Gastrocnemius medialis (tissue), 4 donors: ENCODE measurements at regions of chr11 and their contacts with region 1.

Region 1: GRCh38 chr11:22169833-22170232 is 23.1 kb upstream of the ANO5 start:
- DNase-seq: no peak
- ATAC-seq: no peak
- H3K4me3 ChIP-seq: no peak overlapping the region
- H3K27ac ChIP-seq: no peak overlapping the region
- H3K4me1 ChIP-seq: no peaks in the 10 kb centered on the region
- H3K27me3 ChIP-seq: no peaks in the 10 kb centered on the region
- CTCF ChIP-seq: peak in 3 of 5 experiments; percentile 38 to 53 (median 49)
- POLR2A ChIP-seq: no peak

Region 2: GRCh38 chr11:22304337-22304961 is 134.6 kb after region 1 on chr11:
- in situ Hi-C with region 1: loop called in 3 of 4 experiments (anchors 10 kb)
- intact Hi-C with region 1: loop called (anchors 2 kb)
- DNase-seq: no peak
- ATAC-seq: peak in 1 of 2 donors; percentile 60
- H3K4me3 ChIP-seq: no peak overlapping the region
- H3K27ac ChIP-seq: no peak overlapping the region
- H3K4me1 ChIP-seq: no peaks in the 10 kb centered on the region
- H3K27me3 ChIP-seq: no peaks in the 10 kb centered on the region
- CTCF ChIP-seq: peak; percentile 36 to 63 (median 59)
- POLR2A ChIP-seq: no peak

Region 3: GRCh38 chr11:22539821-22540256 is 370.0 kb after region 1 on chr11:
- in situ Hi-C with region 1: no loop called
- intact Hi-C with region 1: no loop called
- DNase-seq: no peak
- ATAC-seq: no peak
- H3K4me3 ChIP-seq: no peak overlapping the region
- H3K27ac ChIP-seq: no peak overlapping the region
- H3K4me1 ChIP-seq: no peaks in the 10 kb centered on the region
- H3K27me3 ChIP-seq: no peaks in the 10 kb centered on the region
- CTCF ChIP-seq: peak in 4 of 5 experiments; percentile 20 to 52 (median 38)
- POLR2A ChIP-seq: no peak